Motor neuron (in vitro differentiated cells): ENCODE measurements at regions of chr2 and their contacts with region 1.

Region 1: DNA sequence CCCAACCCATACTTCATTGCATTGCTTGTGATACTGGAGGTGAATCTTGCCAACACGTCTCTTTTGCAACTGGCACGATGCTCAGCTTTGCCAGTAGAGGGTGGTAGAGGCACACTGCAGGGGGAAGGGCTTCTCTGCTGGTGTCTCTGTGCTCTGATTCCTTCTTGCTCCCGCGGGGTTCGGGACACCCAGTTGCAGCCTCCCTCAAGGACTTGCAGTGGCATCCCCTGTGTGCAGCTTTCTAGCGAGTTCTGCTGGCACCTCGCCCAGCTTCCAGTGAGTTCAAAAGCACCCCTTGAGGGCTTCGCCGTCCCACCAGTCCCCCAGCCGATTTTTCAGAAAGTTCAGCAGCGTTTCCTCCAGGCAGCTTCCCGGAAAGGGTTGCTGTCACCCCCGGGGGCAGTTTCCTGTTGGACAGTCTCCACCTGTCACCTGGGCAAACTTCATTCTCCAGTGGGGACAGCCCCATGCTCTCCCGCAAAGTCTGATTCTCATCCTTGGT is 35.3 kb upstream of the EN1 start:
- ATAC-seq: peak in 7 of 8 experiments; percentile 27 to 90 (median 56)
- H3K4me3 ChIP-seq: no peak overlapping the region
- H3K27ac ChIP-seq: no peak overlapping the region
- H3K4me1 ChIP-seq: no peaks in the 10 kb centered on the region

Region 2: DNA sequence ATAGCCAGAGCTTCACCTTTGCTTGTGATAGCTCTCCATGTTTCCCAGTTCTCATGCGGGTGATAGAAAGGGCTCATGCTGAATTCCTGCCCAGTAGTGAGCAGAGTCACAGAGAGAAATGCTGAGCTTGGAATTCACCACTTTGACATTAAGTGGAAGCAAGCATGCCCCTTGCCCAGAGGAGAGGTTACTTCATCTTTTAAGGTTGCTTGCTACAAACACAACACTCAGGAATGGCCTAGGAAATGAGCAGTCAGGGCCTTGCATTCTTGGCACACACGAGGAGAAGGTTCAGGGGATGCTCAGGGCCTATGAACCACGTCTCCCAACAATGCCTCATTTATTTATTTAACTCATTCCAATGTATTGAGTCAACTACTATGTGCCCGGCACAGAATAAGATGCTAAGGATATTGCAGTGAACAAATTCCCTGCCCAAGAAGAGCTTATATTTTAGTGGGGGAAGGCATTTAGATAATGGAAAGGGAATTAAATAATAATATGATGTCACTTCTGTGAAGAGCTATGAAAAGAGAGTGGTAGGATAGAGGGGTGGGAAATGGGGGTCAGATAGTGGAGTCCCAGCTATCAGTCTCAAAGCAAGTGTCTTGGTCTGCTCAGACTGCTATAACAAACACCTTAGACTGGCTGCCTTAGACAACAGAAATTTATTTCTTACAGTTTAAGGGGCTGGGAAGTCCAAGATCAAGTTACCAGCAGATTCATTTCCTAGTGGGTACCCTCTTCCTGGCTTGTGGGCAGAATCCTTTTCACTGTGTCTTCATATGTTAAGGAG is 1026.1 kb before region 1 on chr2:
- in situ Hi-C with region 1: no loop called
- ATAC-seq: no peak
- H3K4me3 ChIP-seq: no peak overlapping the region
- H3K27ac ChIP-seq: no peak overlapping the region
- H3K4me1 ChIP-seq: no peaks in the 10 kb centered on the region

Region 3: GRCh38 chr2:118403658-118404451 is 478.9 kb before region 1 on chr2:
- in situ Hi-C with region 1: no loop called
- ATAC-seq: peak in 1 of 8 experiments; percentile 26
- H3K4me3 ChIP-seq: no peak overlapping the region
- H3K27ac ChIP-seq: no peak overlapping the region
- H3K4me1 ChIP-seq: no peaks in the 10 kb centered on the region

Region 4: DNA sequence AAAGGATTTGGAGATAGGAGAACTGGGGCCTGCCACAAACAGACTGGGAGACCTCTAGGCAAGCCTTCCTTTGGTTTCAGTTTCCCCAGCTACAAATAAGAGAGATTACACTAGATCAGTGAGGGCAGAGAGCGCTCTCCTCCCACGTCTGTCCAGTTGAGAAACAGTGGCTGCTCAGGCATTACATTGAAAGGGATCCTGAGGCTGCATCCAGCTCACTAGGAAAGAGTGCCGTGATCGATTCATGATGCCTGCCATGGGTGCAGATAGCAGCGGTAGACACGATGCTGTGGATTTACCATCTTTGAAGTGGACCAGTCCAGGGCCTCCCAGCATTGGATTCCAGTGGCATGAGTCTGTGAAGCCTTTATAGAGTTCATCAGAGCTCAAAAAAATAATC is 97.9 kb before region 1 on chr2:
- in situ Hi-C with region 1: no loop called
- ATAC-seq: no peak
- H3K4me3 ChIP-seq: no peak overlapping the region
- H3K27ac ChIP-seq: no peak overlapping the region
- H3K4me1 ChIP-seq: no peaks in the 10 kb centered on the region

Region 5: DNA sequence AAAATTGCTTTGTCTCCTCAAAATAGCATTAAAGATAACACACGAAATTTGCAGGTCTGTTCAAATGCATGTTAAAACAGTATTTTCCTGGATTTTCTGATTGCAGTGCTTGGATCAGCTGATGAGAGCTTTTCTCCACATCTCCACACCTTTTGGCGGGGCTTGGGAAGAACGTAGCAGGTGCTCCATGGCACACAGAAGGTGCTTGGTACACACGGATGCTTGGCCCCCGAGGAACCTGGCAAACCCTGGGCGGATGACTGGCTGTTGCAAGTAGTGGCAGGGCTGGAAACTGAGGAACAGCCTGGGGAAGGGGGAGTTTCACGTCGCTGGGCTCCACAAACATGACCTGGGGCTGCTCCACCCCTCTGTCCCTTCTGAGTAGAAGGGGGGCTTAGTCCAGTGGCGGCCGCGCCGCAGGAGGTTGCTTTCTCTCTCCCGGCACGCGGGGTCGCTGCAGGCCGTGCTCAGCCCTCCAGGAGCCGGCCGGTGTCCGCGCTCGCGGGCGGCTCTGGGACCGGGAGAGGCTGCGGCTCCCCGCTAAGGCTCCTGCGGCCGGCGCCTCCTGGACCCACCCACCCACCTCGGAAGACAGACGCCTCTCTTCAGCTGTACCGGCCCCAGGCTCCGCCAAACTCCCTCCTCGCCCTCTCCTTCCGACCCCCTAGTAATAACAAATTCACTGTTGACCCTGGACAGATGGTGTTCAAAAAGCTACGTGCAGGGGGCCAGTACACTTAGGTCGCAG is 128.6 kb after region 1 on chr2:
- in situ Hi-C with region 1: loop called in 1 of 9 experiments (anchors 10 kb)
- ATAC-seq: peak; percentile 85 to 100 (median 98)
- H3K4me3 ChIP-seq: peak overlapping the region in 2 of 5 donors; percentile 7 to 11
- H3K27ac ChIP-seq: no peak overlapping the region
- H3K4me1 ChIP-seq: no peaks in the 10 kb centered on the region

Region 6: DNA sequence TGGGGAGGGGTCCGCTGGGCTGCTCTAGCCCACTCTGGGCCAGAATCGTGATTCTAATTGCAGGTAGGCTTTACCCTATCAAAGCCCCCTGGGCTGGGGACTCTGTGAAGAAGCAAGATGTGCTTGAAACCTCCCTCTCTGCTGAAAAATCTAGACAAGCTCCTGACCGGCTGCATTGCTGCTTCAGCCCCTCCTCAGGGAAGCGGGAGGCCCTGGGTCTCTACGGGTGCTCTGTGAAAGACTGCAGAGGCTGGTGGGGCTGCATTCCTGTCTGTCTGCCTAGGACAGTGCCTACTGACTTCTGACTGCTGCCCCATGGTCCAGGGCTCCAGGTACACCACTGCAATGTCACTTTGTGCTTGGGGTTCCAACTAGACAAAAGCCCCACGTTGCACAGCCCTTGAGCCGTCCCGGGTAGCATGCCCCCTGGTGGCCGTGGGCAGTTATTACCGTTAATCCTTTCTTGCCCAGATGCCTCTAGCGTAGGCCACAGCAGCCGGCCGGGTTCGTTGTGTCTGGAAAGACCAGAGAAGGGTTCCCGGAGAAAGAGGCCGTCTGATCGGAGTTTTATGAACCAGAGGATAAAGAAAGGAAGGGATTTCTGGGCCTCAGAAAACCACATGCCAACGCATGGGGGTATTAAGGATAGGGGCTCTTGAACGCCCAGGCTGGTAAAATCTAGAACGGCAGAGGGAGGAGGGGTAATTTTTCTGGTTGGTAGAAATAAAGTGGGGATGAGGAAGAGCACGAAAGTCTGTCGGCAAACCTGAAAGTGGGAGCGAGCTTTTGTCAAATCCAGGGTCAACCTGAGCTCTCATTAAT is 291.7 kb after region 1 on chr2:
- in situ Hi-C with region 1: loop called in 2 of 9 experiments (anchors 25 kb)
- ATAC-seq: peak in 5 of 8 experiments; percentile 15 to 92 (median 67)
- H3K4me3 ChIP-seq: no peak overlapping the region
- H3K27ac ChIP-seq: no peak overlapping the region
- H3K4me1 ChIP-seq: no peaks in the 10 kb centered on the region

Region 7: DNA sequence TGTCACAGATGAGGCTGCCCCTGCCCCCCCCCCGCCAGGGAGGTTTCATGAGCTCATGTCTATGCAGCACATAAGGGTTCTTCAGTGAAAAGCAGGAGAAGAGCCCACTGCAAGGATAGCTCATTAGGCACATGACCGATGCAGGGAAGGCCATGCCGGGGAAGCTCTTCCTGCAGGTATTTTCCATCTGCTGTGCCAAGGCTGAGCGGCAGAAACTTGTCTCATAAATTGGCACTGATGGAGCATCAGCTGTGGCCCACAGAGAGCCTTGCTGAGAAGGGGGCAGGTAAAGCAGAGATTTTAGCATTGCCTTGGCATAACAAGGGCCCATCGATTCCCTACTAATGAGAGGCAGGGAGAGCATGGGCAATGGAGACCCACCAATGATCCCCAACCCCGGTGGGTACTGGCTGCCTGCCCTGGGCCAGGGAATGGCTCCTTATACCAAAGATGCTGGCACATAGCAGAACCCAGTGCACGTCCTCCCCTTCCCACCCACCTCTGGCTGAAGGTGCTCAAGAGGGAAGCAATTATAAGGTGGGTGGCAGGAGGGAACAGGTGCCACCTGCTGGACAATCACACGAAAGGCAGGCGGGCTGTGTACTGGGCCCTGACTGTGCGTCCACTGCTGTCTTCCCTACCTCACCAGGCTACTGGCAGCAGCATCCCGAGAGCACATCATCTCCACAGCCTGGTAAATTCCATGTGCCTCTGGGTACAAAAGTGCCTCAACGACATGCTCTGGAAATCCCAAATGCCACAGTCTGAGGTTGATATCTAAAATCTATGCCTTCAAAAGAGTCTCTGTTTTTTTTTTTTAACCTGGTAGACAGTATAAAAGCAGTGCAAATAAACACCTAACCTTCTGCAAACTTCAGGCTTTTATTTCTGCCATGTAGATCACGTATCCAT is 382.3 kb after region 1 on chr2:
- in situ Hi-C with region 1: loop called in 1 of 9 experiments (anchors 25 kb)
- ATAC-seq: peak; percentile 67 to 94 (median 84)
- H3K4me3 ChIP-seq: no peak overlapping the region
- H3K27ac ChIP-seq: no peak overlapping the region
- H3K4me1 ChIP-seq: no peaks in the 10 kb centered on the region

Region 8: DNA sequence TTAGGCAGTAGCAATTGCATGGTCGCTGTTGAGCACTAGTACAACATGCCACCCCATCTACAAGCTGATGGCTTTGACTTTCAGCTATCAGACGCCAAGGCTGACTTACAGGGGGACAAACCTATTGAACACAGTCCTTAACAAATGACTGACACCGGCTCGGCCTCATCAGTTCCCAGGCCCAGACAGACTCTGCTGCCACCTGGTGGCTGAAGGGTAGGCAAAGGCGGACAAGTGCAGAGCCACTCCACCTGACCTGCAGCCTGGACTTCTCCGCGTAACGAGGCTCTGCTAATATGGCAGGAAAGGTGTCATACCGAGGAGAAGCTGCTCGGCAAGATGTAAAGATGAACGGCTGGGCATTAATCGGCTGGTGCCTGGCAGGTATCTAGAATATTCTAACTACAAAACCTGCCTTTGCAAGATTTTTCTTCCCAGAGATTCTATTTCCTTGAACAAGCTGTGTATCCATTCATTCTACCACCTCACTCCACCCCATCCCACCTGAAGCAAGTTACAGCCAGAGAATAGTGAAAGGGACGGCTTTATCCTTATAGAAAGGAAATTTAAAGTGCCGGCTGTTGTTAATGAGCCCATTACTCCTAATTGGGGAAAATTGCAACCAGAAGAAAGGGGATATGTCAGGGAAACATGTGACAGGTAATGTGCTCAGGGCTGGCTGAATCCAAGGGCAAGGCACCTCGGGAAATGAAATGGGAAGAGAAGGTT is 408.3 kb after region 1 on chr2:
- in situ Hi-C with region 1: loop called in 2 of 9 experiments (anchors 25 kb)
- ATAC-seq: peak; percentile 91 to 97 (median 95)
- H3K4me3 ChIP-seq: no peak overlapping the region
- H3K27ac ChIP-seq: no peak overlapping the region
- H3K4me1 ChIP-seq: peaks cover 8 to 9% of the 10 kb centered on the region in 2 donors

Region 9: DNA sequence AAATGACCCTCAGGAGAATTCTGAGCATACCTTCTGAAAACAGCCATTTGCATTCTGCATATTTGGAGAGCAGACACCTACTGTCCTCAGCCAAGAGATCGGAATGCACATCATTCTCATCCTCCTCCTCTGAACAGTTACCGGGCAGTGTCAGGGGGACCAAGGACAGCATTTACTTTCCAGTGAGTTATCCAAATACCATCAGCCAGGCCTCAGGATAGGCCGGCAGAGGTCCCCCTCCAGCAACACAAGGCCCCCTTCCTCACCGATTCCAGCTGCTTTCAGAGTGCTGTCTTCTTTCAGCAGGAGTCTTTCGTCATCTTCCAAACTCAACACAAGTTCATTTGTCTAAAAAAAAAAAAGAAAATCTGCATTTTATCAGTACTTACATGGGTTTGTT is 428.6 kb after region 1 on chr2:
- in situ Hi-C with region 1: loop called in 1 of 9 experiments (anchors 25 kb)
- ATAC-seq: peak in 2 of 8 experiments; percentile 18 to 29
- H3K4me3 ChIP-seq: no peak overlapping the region
- H3K27ac ChIP-seq: no peak overlapping the region
- H3K4me1 ChIP-seq: no peaks in the 10 kb centered on the region